PC-3 (cell line): ENCODE measurements at regions of chr6 and their contacts with region 1.

Region 1: DNA sequence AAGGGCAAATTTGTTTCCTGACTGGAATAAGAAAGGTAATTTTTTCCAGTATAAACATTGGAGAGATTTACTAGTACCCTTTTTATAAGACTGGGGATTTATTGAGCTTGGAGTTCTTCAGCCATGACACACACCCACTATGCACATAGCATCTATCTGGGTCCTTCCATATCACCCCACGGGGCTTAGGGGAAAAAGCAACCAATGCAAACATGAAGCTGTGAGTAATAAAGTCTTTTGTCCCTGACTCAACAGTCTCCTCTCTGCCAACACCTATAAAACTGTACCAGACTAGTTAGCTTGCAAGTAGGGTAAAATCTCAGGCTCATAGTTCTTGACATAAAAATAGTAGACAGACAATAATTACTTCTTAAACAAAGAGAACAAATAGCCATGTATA is 23.4 kb downstream of the COL21A1 start:
- DNase-seq: peak; percentile 97
- ATAC-seq: peak; percentile 92
- H3K4me3 ChIP-seq: no peak overlapping the region
- H3K27ac ChIP-seq: peak overlapping the region; percentile 79
- H3K4me1 ChIP-seq: peaks cover 63% of the 10 kb centered on the region
- H3K27me3 ChIP-seq: no peaks in the 10 kb centered on the region
- CTCF ChIP-seq: no peak

Region 2: GRCh38 chr6:56101141-56101553 is 122.8 kb before region 1 on chr6:
- CTCF ChIA-PET with region 1: no interaction called
- POLR2A ChIA-PET with region 1: no interaction called
- intact Hi-C with region 1: loop called (anchors 1 kb)
- DNase-seq: peak; percentile 95
- ATAC-seq: peak; percentile 99
- H3K4me3 ChIP-seq: no peak overlapping the region
- H3K27ac ChIP-seq: peak overlapping the region; percentile 83
- H3K4me1 ChIP-seq: peaks cover 26% of the 10 kb centered on the region
- H3K27me3 ChIP-seq: no peaks in the 10 kb centered on the region
- CTCF ChIP-seq: no peak

Region 3: DNA sequence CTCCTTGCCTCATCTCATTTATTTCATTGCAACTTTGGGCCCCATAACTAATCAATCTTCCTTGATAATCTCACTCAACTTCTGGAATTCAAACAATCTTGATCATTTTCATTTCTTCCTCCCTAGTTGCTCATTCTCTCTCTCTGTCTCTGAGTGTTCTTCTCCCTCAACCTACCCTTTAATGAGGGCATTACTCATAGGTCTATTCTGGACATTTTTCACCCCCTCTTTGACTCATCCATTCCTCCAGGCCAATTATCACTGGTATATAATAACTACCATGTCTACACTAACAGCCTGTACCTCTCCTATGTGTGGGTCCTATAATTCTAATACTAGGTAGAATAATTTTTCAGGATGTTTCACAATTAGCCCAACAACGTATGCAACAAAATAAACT is 55.4 kb before region 1 on chr6:
- CTCF ChIA-PET with region 1: no interaction called
- POLR2A ChIA-PET with region 1: no interaction called
- intact Hi-C with region 1: loop called (anchors 5 kb)
- DNase-seq: peak; percentile 36
- ATAC-seq: peak; percentile 29
- H3K4me3 ChIP-seq: no peak overlapping the region
- H3K27ac ChIP-seq: peak overlapping the region; percentile 52
- H3K4me1 ChIP-seq: peaks cover 12% of the 10 kb centered on the region
- H3K27me3 ChIP-seq: no peaks in the 10 kb centered on the region
- CTCF ChIP-seq: no peak

Region 4: GRCh38 chr6:56235245-56235644 is 11.2 kb after region 1 on chr6:
- CTCF ChIA-PET with region 1: no interaction called
- POLR2A ChIA-PET with region 1: no interaction called
- intact Hi-C with region 1: loop called (anchors 1 kb)
- DNase-seq: peak; percentile 60
- ATAC-seq: peak; percentile 82
- H3K4me3 ChIP-seq: no peak overlapping the region
- H3K27ac ChIP-seq: no peak overlapping the region
- H3K4me1 ChIP-seq: peaks cover 28% of the 10 kb centered on the region
- H3K27me3 ChIP-seq: no peaks in the 10 kb centered on the region
- CTCF ChIP-seq: no peak

Region 5: DNA sequence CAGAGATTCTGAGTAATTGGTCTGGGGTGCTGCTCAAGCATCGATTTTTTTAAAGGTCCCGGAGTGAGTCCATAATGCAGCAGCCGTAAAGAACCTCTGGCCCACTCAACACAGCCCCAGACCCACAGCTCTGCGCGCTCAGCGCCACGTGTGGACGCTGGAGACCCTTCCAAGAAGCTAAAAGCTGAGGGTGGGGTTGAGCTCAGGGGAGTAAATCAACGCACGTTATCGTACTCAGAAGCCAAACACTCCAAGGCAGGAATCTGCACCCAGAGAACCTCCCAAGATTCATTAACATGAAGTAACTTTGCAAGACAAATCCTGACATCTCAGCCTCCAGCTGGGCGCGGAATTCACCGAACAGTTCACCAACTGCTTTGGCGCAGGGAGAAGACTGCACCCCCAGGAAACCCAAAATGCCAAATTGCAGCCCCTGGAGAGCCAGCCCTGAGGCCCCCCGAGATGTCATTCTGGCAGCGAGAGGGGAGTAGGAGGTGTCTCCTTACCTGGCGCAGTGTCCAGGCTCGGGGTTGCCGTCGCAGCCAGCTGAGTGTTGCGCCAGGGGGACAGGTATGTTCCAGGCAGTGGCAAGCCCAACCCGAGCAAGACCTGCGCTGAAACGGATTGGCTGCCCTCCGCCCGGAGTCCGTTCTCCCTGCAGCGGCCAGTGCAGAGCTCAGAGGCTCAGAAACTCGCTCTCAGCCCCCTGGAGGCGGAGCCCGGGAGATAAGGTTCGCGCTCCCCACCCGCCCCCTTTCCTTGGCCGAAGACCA is 23.1 kb after region 1 on chr6 and contains the start of gene COL21A1:
- CTCF ChIA-PET with region 1: no interaction called
- POLR2A ChIA-PET with region 1: no interaction called
- intact Hi-C with region 1: loop called (anchors 2 kb)
- DNase-seq: peak; percentile 61
- ATAC-seq: peak; percentile 95
- H3K4me3 ChIP-seq: peak within 1 kb of the TSS; percentile 72
- H3K27ac ChIP-seq: no peak within 1 kb of the TSS
- H3K4me1 ChIP-seq: peaks cover 9% of the 10 kb centered on the region
- H3K27me3 ChIP-seq: no peaks in the 10 kb centered on the region
- CTCF ChIP-seq: peak; percentile 59
- total RNA-seq, gene COL21A1: 0.35 and 1.0 TPM in 2 replicates

Region 6: DNA sequence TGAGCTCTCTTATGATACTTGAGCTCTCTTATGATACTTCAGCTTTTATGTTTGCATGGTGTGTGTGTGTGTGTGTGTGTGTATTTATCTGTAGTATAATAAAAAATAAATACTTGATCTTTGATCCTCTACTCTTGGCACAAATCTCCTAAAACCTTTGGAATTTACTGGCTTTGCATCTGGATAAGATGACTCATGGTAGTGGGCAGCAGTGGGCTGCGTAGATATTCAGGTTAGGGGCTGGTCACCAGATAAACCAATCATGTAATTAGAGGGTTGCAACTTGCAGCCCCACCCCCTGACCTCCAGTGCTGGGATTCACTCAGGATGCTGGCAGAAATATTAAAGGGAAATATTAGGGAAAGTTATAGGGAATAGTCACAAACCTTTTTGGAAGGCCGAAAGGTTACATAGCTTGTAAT is 175.3 kb after region 1 on chr6:
- CTCF ChIA-PET with region 1: no interaction called
- POLR2A ChIA-PET with region 1: no interaction called
- intact Hi-C with region 1: no loop called
- DNase-seq: peak; percentile 76
- ATAC-seq: peak; percentile 78
- H3K4me3 ChIP-seq: no peak overlapping the region
- H3K27ac ChIP-seq: 0 out of 2 replicates have a peak overlapping the region, but pooled peaks have one; percentile 13
- H3K4me1 ChIP-seq: peaks cover 25% of the 10 kb centered on the region
- H3K27me3 ChIP-seq: no peaks in the 10 kb centered on the region
- CTCF ChIP-seq: no peak